Activated CD8-positive, alpha-beta T cell treated with anti-CD3 and anti-CD28 coated beads for 36 hours (primary cell): ENCODE measurements at regions of chr9 and their contacts with region 1.

Region 1: DNA sequence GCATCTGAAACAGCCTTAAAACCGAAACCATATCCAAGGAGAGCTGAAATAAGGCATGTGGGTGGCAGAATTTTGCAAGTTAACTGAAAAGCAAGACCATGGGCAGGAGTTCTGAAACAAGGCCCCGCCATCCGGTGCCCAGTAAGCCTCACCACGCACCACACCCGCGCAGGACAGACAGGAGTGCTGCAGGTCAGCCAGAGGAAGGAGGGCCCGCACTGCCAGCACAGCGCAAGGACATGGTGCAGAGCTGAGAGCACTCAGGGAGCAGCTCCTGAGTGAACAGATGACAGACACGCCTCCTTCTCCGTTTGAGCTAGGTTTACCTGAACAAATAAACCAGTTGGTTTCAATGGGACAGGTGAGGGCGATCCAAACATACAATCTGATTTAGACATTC is 16.5 kb upstream of the ISCA1 start:
- DNase-seq: no peak
- ATAC-seq: no peak
- H3K4me3 Mint-ChIP-seq: no peak overlapping the region
- H3K27ac Mint-ChIP-seq: peak overlapping the region; percentile 57
- H3K4me1 Mint-ChIP-seq: peaks cover 24% of the 10 kb centered on the region
- H3K27me3 Mint-ChIP-seq: no peaks in the 10 kb centered on the region
- CTCF ChIP-seq: no peak

Region 2: DNA sequence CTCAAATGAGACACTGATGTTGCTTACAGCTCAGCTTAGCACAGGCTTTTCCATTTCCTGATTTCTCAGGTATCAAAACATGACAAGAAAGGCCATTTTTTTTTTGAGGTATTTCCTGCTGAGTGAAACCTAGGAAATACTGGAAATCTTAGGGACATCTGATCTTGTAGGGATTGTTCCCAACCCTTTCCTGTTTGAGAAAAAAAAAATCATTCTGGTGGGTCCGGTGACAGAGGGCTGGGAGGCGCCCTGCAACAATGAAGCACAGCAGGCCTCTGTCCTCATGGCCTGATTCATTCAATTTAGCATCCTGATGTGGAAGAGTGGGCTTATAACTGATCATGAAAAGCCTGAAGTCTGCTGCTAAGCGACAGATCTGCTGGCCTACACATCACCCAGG is 36.4 kb before region 1 on chr9:
- CTCF ChIA-PET with region 1: no interaction called
- POLR2A ChIA-PET with region 1: no interaction called
- intact Hi-C with region 1: no loop called
- DNase-seq: no peak
- ATAC-seq: no peak
- H3K4me3 Mint-ChIP-seq: no peak overlapping the region
- H3K27ac Mint-ChIP-seq: no peak overlapping the region
- H3K4me1 Mint-ChIP-seq: no peaks in the 10 kb centered on the region
- H3K27me3 Mint-ChIP-seq: no peaks in the 10 kb centered on the region
- CTCF ChIP-seq: no peak

Region 3: GRCh38 chr9:86337469-86338108 is 38.7 kb after region 1 on chr9:
- CTCF ChIA-PET with region 1: no interaction called
- POLR2A ChIA-PET with region 1: no interaction called
- intact Hi-C with region 1: loop called (anchors 5 kb)
- DNase-seq: no peak
- ATAC-seq: peak; percentile 43
- H3K4me3 Mint-ChIP-seq: peak overlapping the region; percentile 67
- H3K27ac Mint-ChIP-seq: peak overlapping the region; percentile 57
- H3K4me1 Mint-ChIP-seq: peaks cover 49% of the 10 kb centered on the region
- H3K27me3 Mint-ChIP-seq: no peaks in the 10 kb centered on the region
- CTCF ChIP-seq: no peak